ENCODE measurements at regions of chr3 and their contacts with region 1.

Region 1: DNA sequence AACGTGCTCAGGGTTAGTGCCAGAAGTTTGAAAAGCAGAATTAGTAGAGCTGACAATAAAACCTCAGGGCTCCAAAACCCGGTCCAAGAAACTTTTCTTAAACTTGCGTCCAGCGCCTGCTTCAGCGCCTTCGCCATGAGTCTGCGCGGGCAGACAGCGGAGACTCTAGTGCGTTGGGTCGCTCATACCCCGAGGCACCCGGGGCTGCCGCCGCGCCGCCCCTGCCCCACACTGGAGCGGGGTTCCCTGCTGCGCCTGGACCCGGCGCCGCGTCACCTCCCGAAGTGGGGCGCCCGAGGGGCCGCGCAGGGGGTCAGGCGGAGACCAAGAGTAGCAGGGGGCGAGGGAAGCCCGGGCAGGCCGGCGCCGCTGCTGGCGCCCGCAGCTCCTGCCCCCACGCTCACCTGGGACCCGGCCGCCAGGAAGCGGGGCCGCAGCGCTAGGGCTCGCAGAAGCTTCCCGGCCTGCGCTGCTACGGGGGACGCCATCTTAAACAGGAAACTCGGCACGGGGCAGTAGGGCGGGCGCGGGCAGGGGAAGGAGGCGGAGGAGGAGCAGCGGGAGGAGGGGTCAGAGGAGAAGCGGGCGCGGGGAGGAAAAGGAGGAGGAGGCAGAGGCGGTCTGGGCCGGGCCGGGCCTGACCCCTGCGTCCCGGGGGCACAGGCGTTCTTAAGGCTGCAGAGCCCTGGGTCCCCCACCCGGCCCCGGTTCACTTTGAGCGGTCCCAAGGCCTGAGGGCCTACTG is at the start of gene SUCLG2:
- DNase-seq: peak; percentile 91
- H3K4me3 Mint-ChIP-seq: peak within 1 kb of the TSS; percentile 76
- H3K27ac Mint-ChIP-seq: peak within 1 kb of the TSS; percentile 82
- H3K4me1 Mint-ChIP-seq: peaks cover 58% of the 10 kb centered on the region
- H3K27me3 Mint-ChIP-seq: no peaks in the 10 kb centered on the region
- total RNA-seq, gene SUCLG2: 53.3 to 57.8 TPM

Region 2: GRCh38 chr3:66490214-66490613 is 1164.1 kb before region 1 on chr3:
- CTCF ChIA-PET with region 1: no interaction called
- POLR2A ChIA-PET with region 1: no interaction called
- intact Hi-C with region 1: loop called (anchors 2 kb)
- DNase-seq: peak; percentile 54
- H3K4me3 Mint-ChIP-seq: peak overlapping the region; percentile 60
- H3K27ac Mint-ChIP-seq: peak overlapping the region; percentile 91
- H3K4me1 Mint-ChIP-seq: peaks cover 87% of the 10 kb centered on the region
- H3K27me3 Mint-ChIP-seq: no peaks in the 10 kb centered on the region

Region 3: DNA sequence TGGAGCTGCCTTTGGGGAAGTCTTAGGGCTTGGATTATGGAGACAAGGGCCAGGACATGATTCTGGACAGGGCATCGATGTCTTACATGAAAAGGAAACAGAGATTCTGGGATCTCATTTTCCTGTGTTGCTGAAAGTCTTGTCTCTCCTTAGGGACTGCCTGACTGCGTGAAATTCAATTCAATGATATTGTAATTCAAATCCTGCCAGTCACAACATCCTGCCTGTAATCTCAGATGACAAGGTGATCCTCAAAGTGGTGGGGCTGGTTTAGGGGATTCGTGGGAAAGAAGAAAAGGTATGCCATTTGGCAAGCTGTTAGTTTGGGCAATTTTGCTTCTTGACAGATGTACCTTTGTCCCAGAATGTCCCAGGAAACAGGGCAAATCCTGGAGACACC is 527.0 kb before region 1 on chr3:
- CTCF ChIA-PET with region 1: no interaction called
- POLR2A ChIA-PET with region 1: no interaction called
- intact Hi-C with region 1: no loop called
- DNase-seq: no peak
- H3K4me3 Mint-ChIP-seq: no peak overlapping the region
- H3K27ac Mint-ChIP-seq: no peak overlapping the region
- H3K4me1 Mint-ChIP-seq: no peaks in the 10 kb centered on the region
- H3K27me3 Mint-ChIP-seq: peaks cover 11% of the 10 kb centered on the region

Region 4: DNA sequence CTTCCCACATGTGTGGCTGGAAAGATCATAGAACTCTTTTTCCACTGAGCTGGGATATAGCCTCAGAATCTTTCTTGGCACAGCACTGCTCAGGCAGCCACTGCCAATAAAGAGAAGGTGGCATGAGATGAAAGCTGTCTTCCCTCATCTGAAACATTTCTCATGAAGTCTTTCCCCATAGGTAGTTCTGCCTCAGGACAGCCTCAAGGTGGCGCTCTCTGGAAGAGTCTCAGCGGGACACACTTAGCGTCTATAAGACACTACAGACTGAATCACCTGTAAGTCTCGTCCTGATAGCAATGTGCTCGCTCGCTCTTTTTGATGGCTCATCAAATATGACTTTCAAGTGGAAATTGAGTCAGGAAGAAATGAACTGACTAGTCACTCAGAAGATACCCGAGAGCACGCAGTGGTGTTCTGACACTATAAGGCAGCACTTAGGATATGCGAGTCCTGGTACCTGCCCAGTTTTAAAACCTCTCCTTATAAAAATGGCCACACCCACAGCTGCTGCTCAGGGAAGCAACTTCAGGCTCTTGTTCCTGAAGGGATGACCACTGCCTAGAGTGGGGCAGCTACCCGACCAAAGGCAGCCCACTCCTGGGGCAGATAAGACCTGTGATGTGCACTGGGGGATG is 269.4 kb before region 1 on chr3:
- CTCF ChIA-PET with region 1: interaction called, 3 read pairs
- POLR2A ChIA-PET with region 1: no interaction called
- intact Hi-C with region 1: loop called (anchors 10 kb)
- DNase-seq: peak; percentile 61
- H3K4me3 Mint-ChIP-seq: no peak overlapping the region
- H3K27ac Mint-ChIP-seq: no peak overlapping the region
- H3K4me1 Mint-ChIP-seq: peaks cover 20% of the 10 kb centered on the region
- H3K27me3 Mint-ChIP-seq: no peaks in the 10 kb centered on the region

Region 5: GRCh38 chr3:67635257-67635656 is 19.0 kb before region 1 on chr3:
- CTCF ChIA-PET with region 1: no interaction called
- POLR2A ChIA-PET with region 1: interaction called, 12 read pairs
- intact Hi-C with region 1: loop called (anchors 1 kb)
- DNase-seq: peak; percentile 29
- H3K4me3 Mint-ChIP-seq: no peak overlapping the region
- H3K27ac Mint-ChIP-seq: peak overlapping the region; percentile 67
- H3K4me1 Mint-ChIP-seq: peaks cover 66% of the 10 kb centered on the region
- H3K27me3 Mint-ChIP-seq: no peaks in the 10 kb centered on the region

Region 6: GRCh38 chr3:68057637-68058320 is 403.5 kb after region 1 on chr3:
- CTCF ChIA-PET with region 1: no interaction called
- POLR2A ChIA-PET with region 1: no interaction called
- intact Hi-C with region 1: loop called (anchors 10 kb)
- DNase-seq: peak; percentile 78
- H3K4me3 Mint-ChIP-seq: peak overlapping the region; percentile 50
- H3K27ac Mint-ChIP-seq: peak overlapping the region; percentile 67
- H3K4me1 Mint-ChIP-seq: peaks cover 64% of the 10 kb centered on the region
- H3K27me3 Mint-ChIP-seq: no peaks in the 10 kb centered on the region

Measured in activated CD4-positive, alpha-beta memory T cell treated with anti-CD3 and anti-CD28 coated beads for 36 hours (primary cell).